Heart right ventricle (tissue), 16 donors: ENCODE measurements at regions of chr4 and their contacts with region 1.

Region 1: DNA sequence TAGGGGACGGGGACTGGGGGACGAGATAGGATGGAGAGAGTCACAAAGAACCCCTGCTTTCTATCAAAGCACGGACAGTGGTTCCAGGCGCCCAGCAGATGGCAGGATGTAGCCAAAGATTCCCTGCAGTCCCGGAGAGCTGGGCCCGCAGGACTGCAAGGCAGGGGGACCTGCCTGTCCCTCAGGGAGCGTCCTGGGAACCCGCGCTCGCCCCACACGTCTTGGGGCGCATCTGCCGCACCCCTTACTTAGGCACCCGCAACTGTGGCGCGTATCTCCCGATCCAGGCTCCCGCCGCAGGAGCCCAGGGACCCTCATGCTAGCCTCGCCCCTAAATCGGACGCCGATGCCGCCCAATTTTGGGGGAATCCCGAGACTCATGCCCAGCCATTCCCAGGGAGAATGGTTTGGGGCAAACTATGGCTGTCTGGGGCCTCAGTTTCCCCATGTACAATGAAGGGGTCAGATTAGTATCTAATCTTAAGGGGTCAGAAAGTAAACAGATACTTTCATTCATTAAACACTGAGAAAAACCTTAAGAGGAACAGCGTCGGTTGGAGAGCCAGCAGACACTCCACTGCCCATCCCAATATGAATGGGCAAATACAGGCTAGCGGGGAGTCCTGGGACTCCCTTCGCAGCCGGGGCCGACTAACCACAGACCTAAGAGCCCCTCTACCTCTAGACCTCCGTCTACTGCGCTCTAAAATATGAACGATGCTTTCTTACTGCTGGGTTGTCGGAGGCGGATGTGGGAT is 581 bp upstream of the STK32B start:
- DNase-seq: peak; percentile 66 to 69
- ATAC-seq: peak; percentile 83 to 95 (median 88)
- H3K4me3 ChIP-seq: peak overlapping the region; percentile 24 to 64 (median 57)
- H3K27ac ChIP-seq: peak overlapping the region in 1 of 10 donors; percentile 57
- H3K4me1 ChIP-seq: peaks cover 0 to 23% (median 17%) of the 10 kb centered on the region in 9 donors
- H3K27me3 ChIP-seq: peaks cover 0 to 49% (median 24%) of the 10 kb centered on the region in 7 donors
- CTCF ChIP-seq: peak; percentile 52 to 79 (median 69)

Region 2: GRCh38 chr4:5003372-5003857 is 47.3 kb before region 1 on chr4:
- intact Hi-C with region 1: no loop called
- DNase-seq: no peak
- ATAC-seq: no peak
- H3K4me3 ChIP-seq: no peak overlapping the region
- H3K27ac ChIP-seq: no peak overlapping the region
- H3K4me1 ChIP-seq: no peaks in the 10 kb centered on the region
- H3K27me3 ChIP-seq: peaks cover 9 to 71% (median 44%) of the 10 kb centered on the region in 7 donors
- CTCF ChIP-seq: no peak

Region 3: GRCh38 chr4:5142726-5143125 is 92.0 kb after region 1 on chr4:
- intact Hi-C with region 1: loop called in 3 of 10 experiments (anchors 5 kb)
- DNase-seq: peak in 1 of 2 donors; percentile 28
- ATAC-seq: no peak
- H3K4me3 ChIP-seq: no peak overlapping the region
- H3K27ac ChIP-seq: no peak overlapping the region
- H3K4me1 ChIP-seq: no peaks in the 10 kb centered on the region
- H3K27me3 ChIP-seq: peaks cover 0 to under 1% (median 0%) of the 10 kb centered on the region in 7 donors
- CTCF ChIP-seq: peak in 8 of 9 donors; percentile 9 to 57 (median 48)

Region 4: GRCh38 chr4:5460116-5460801 is 409.6 kb after region 1 on chr4:
- intact Hi-C with region 1: loop called in 3 of 10 experiments (anchors 5 to 10 kb)
- DNase-seq: no peak
- ATAC-seq: no peak
- H3K4me3 ChIP-seq: no peak overlapping the region
- H3K27ac ChIP-seq: no peak overlapping the region
- H3K4me1 ChIP-seq: no peaks in the 10 kb centered on the region
- H3K27me3 ChIP-seq: peaks cover 0 to 5% (median 0%) of the 10 kb centered on the region in 7 donors
- CTCF ChIP-seq: peak in 8 of 9 donors; percentile 8 to 54 (median 40)

Region 5: DNA sequence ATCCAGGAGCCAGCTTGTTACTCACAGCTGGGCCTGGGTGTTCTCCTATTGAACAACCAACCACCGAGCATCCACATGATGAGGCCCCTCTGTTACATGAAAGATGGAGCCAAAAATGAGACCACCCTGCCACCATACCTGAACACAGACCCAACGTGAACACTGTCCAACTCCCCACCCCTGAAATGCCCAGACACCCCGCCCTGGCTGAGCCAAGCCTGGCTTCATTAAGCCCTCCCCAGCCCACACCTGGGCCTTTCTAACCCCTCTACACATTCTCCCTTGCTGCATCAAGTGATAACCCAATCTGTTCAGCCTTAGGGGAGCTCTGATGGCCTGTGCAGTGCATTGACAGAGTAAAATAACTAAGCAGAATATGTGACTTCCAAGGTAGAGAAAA is 741.0 kb after region 1 on chr4:
- intact Hi-C with region 1: loop called in 3 of 10 experiments (anchors 5 kb)
- DNase-seq: no peak
- ATAC-seq: no peak
- H3K4me3 ChIP-seq: no peak overlapping the region
- H3K27ac ChIP-seq: no peak overlapping the region
- H3K4me1 ChIP-seq: no peaks in the 10 kb centered on the region
- H3K27me3 ChIP-seq: no peaks in the 10 kb centered on the region
- CTCF ChIP-seq: no peak

Region 6: GRCh38 chr4:5812506-5813229 is 762.0 kb after region 1 on chr4:
- intact Hi-C with region 1: loop called in 7 of 10 experiments (anchors 2 to 10 kb)
- DNase-seq: peak in 1 of 2 donors; percentile 52
- ATAC-seq: peak in 7 of 8 donors; percentile 68 to 80 (median 72)
- H3K4me3 ChIP-seq: no peak overlapping the region
- H3K27ac ChIP-seq: no peak overlapping the region
- H3K4me1 ChIP-seq: no peaks in the 10 kb centered on the region
- H3K27me3 ChIP-seq: no peaks in the 10 kb centered on the region
- CTCF ChIP-seq: peak; percentile 50 to 81 (median 71)